ENCODE measurements at regions of chr11 and their contacts with region 1.

Region 1: GRCh38 chr11:117205211-117205818 is 6.1 kb downstream of the TAGLN start:
- DNase-seq: no peak
- ATAC-seq: no peak
- H3K4me3 ChIP-seq: no peak overlapping the region
- H3K27ac ChIP-seq: no peak overlapping the region
- H3K4me1 ChIP-seq: no peaks in the 10 kb centered on the region
- H3K27me3 ChIP-seq: no peaks in the 10 kb centered on the region
- CTCF ChIP-seq: no peak

Region 2: GRCh38 chr11:117127171-117127901 is 78.0 kb before region 1 on chr11:
- intact Hi-C with region 1: loop called (anchors 2 to 5 kb)
- DNase-seq: no peak
- ATAC-seq: no peak
- H3K4me3 ChIP-seq: no peak overlapping the region
- H3K27ac ChIP-seq: no peak overlapping the region
- H3K4me1 ChIP-seq: no peaks in the 10 kb centered on the region
- H3K27me3 ChIP-seq: no peaks in the 10 kb centered on the region
- CTCF ChIP-seq: no peak

Region 3: GRCh38 chr11:117134431-117134830 is 70.9 kb before region 1 on chr11:
- intact Hi-C with region 1: loop called (anchors 2 to 5 kb)
- DNase-seq: no peak
- ATAC-seq: no peak
- H3K4me3 ChIP-seq: no peak overlapping the region
- H3K27ac ChIP-seq: no peak overlapping the region
- H3K4me1 ChIP-seq: no peaks in the 10 kb centered on the region
- H3K27me3 ChIP-seq: no peaks in the 10 kb centered on the region
- CTCF ChIP-seq: no peak

Measured in psoas muscle (tissue), 8 donors.